ENCODE measurements at regions of chr19 and their contacts with region 1.

Region 1: GRCh38 chr19:47436712-47437401 is 17.5 kb upstream of the MEIS3 start:
- DNase-seq: peak; percentile 81 to 91
- ATAC-seq: peak; percentile 88
- H3K4me3 ChIP-seq: no peak overlapping the region
- H3K27ac ChIP-seq: no peak overlapping the region
- H3K4me1 ChIP-seq: no peaks in the 10 kb centered on the region
- H3K27me3 ChIP-seq: no peaks in the 10 kb centered on the region

Region 2: GRCh38 chr19:47176627-47177090 is 260.2 kb before region 1 on chr19:
- intact Hi-C with region 1: no loop called
- DNase-seq: peak in 1 of 2 donors; percentile 55
- ATAC-seq: peak; percentile 55
- H3K4me3 ChIP-seq: no peak overlapping the region
- H3K27ac ChIP-seq: peak overlapping the region; percentile 77 to 99
- H3K4me1 ChIP-seq: no peaks in the 10 kb centered on the region
- H3K27me3 ChIP-seq: no peaks in the 10 kb centered on the region

Region 3: DNA sequence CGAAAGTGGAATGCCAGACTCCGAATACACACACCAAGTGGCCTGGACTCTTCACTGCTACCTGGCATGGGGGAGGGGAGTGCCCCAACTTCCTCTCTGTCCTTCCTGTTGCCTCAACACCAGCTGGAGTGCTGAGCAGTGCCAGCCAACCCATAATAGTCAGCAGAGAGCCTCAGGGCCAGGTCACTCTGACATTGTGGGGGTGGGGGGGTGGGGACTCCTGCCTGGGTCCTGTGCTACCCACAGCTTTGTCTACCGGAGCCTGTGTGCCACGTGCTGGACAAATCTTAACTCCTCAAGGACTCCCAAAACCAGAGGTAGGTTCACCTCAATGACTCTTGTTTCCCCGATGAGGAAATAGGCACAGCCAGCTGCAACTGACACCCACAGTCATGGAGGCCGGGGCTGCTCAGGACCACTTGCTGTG is 100.0 kb before region 1 on chr19:
- intact Hi-C with region 1: no loop called
- DNase-seq: peak; percentile 76 to 83
- ATAC-seq: peak; percentile 27
- H3K4me3 ChIP-seq: no peak overlapping the region
- H3K27ac ChIP-seq: no peak overlapping the region
- H3K4me1 ChIP-seq: no peaks in the 10 kb centered on the region
- H3K27me3 ChIP-seq: no peaks in the 10 kb centered on the region

Region 4: DNA sequence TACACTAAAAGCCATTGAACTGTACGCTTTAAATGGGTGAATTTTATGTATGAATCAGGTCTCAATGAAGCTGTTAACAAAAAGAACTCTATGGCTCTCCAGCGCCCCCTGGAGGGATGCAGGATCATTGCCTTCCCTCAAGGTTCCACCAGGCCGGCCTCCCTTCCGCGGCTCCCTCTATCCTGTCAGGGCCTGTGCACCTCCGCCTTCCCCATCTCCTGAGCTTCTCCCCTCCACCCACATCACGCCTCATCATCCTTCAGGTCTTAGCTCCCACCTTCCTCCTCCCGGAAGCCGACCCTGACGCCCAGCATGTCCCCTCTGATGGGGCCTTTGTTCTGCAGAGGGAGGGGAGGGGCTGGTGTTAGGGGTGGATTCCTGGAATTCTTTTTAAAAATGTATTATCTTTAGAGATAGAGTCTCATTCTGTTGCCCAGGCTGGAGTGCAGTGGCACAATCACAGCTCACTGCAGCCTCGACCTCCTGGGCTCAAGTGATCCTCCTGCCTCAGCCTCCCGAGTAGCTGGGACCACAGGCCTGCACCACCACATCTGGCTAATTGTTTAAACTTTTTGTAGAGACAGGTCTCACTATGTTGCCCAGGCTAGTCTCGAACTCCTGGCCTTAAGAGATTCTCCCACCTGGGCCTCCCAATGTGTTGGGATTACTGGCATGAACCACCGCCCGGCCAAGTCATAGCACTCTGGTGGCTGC is 45.2 kb before region 1 on chr19:
- intact Hi-C with region 1: no loop called
- DNase-seq: peak; percentile 87 to 95
- ATAC-seq: peak; percentile 76
- H3K4me3 ChIP-seq: no peak overlapping the region
- H3K27ac ChIP-seq: no peak overlapping the region
- H3K4me1 ChIP-seq: no peaks in the 10 kb centered on the region
- H3K27me3 ChIP-seq: no peaks in the 10 kb centered on the region

Region 5: DNA sequence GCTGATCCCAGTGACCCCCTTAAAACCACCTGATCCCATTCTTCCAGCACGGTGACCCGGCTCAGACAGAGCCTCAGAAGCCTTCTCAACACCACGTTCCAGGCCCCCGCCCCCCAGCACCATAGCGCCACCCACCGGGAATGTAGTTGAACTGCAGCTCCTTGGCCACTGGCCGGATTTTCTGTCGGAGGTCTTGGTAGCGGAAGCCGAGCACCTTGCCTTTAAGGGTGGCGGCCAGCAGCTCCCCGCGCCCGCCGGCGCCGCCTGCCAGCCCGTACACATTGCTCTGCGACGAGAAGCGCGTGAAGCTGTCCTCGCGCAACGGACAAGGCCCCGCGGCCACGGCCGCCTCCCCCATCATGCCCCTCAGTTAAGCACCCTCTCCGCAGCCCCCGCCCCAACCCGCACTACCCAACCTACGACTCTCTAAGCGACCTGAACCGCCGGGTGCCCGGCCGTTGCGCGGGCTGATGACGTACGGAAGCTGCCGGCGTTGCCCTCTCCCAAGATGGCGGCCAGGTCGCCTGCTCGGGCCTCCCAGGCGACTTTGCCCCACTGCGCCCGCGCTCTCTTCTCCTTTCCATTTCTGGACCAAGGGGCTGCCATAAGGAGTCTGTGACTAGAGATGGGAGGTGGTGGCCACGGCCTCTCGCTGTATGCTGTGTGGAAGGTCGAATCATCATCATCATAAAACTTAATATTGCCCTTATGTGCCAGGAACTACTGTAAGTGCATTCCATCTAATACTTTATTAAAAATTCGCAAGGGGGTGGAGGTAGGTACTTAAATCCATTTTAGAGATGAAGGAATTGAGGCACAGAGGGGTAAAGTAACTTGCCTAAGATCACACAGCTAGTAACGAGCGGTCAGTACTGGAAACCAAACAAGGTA is 47.2 kb after region 1 on chr19 and contains the start of gene KPTN:
- intact Hi-C with region 1: loop called in 1 of 2 experiments (anchors 5 kb)
- DNase-seq: peak; percentile 94 to 97
- ATAC-seq: peak; percentile 94
- H3K4me3 ChIP-seq: peak within 1 kb of the TSS; percentile 54 to 73
- H3K27ac ChIP-seq: peak within 1 kb of the TSS in 1 of 2 donors; percentile 18
- H3K4me1 ChIP-seq: no peaks in the 10 kb centered on the region
- H3K27me3 ChIP-seq: no peaks in the 10 kb centered on the region
- total RNA-seq, gene KPTN: 3.0 to 4.3 TPM

Region 6: DNA sequence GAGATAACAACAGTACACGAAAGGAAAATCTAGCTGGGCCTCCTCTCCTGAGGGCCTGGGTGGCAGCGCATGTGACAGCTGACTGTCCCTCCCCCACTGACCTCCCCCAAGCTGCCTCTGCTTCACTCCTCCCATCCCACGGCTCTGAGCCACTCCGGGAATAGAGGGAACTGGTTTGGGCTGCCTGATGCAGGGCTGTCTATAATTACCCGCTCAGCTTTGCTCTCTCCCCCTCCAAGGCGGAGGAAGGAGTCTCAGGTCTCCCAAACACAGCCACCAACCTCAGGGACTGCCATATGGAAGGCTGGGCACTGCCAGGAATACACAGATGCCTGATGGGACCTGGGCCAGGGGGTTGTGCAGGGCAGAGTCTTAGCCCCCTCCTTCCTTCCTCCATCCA is 70.2 kb after region 1 on chr19:
- intact Hi-C with region 1: no loop called
- DNase-seq: no peak
- ATAC-seq: no peak
- H3K4me3 ChIP-seq: no peak overlapping the region
- H3K27ac ChIP-seq: no peak overlapping the region
- H3K4me1 ChIP-seq: no peaks in the 10 kb centered on the region
- H3K27me3 ChIP-seq: no peaks in the 10 kb centered on the region

Region 7: DNA sequence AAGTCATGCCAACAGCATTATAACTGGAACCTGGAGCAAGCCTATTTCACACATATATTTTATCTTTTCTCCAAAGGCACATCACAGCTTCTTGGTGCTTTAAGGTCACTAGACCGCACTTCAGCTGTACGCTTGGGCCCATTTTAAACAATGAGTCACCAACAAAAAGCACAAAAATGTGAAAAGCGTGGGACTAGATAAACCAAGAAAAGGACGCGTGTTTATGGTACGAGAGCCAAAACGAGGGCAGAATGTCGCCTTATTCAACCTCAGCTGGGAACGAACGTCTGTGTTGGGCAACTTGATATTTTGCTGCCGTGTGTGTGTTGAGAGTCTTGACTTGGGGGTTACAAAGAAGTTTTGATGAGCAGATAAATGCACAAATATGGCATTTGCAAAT is 267.2 kb after region 1 on chr19:
- intact Hi-C with region 1: loop called in 1 of 2 experiments (anchors 2 kb)
- DNase-seq: no peak
- ATAC-seq: no peak
- H3K4me3 ChIP-seq: no peak overlapping the region
- H3K27ac ChIP-seq: no peak overlapping the region
- H3K4me1 ChIP-seq: no peaks in the 10 kb centered on the region
- H3K27me3 ChIP-seq: no peaks in the 10 kb centered on the region

Measured in aorta (tissue), 5 donors.